ENCODE measurements at regions of chr11 and their contacts with region 1.

Region 1: DNA sequence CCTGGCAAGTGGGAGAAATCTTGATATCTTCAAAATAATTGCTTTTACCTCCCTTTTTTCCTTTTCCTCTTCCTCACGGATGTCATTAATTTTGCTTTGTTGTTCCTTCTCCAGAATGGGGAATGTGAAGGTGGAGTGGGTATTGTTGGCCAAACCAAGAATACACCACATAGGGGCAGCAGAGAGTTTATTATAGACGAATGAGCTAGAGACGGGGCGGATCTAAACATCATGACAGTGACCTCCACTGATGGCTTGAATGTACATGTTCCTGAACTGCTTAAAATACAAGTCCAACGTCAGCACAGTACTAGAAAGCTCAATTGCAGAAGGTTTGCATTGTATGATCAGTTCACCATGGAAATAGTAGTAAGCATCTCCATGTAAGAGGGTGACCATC is 122.3 kb upstream of the SNX19 start:
- DNase-seq: peak; percentile 45 to 59
- H3K4me3 ChIP-seq: no peak overlapping the region
- H3K4me3 Mint-ChIP-seq: no peak overlapping the region
- H3K27ac Mint-ChIP-seq: no peak overlapping the region
- H3K4me1 ChIP-seq: no peaks in the 10 kb centered on the region; the same call in 1 of the 2 replicates
- H3K4me1 Mint-ChIP-seq: no peaks in the 10 kb centered on the region
- H3K27me3 ChIP-seq: no peaks in the 10 kb centered on the region
- H3K27me3 Mint-ChIP-seq: peaks cover 10% of the 10 kb centered on the region
- CTCF ChIP-seq: peak; percentile 33 to 58

Region 2: DNA sequence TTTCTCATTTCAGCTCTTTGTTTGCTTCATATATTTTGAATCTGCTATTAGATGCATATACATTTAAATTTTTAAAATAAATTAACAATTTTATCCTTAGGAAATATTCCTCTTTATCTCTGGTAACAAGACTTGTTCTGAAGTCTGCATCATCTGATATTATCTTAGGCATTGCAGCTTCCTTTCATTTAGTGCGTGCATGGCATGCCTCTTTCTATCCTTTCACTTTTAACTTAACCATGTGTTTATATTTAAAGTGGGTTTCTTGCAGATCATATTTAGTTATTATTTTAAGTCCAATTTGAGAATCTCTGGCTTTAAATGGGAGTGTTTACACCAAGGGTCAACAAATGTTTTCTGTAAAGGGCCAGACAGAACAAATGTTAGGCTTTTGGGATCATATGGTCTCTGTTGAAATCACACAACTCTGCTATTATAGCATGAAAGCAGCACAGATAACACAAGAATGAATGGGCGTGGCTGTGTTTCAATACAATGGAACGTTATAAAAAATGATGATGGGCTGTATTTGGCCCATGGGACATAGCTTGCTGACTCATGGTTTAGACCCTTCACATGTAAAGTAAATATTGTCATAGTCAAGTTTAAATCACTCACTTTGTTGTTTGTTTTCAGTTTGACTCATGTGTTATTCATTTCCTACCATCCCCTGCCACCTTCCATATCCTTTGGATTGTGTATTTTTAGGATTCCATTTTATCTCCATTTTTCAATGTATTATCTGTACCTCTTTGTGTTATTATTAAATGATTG is 38.4 kb before region 1 on chr11:
- CTCF ChIA-PET with region 1: no interaction called
- POLR2A ChIA-PET with region 1: interaction called, 4 read pairs
- intact Hi-C with region 1: loop called (anchors 1 kb)
- DNase-seq: peak; percentile 47 to 57
- H3K4me3 ChIP-seq: no peak overlapping the region
- H3K4me3 Mint-ChIP-seq: no peak overlapping the region
- H3K27ac Mint-ChIP-seq: no peak overlapping the region
- H3K4me1 ChIP-seq: peaks cover 7% of the 10 kb centered on the region; the same call in 1 of the 2 replicates
- H3K4me1 Mint-ChIP-seq: peaks cover 21% of the 10 kb centered on the region
- H3K27me3 ChIP-seq: no peaks in the 10 kb centered on the region
- H3K27me3 Mint-ChIP-seq: peaks cover 5% of the 10 kb centered on the region
- CTCF ChIP-seq: no peak

Region 3: DNA sequence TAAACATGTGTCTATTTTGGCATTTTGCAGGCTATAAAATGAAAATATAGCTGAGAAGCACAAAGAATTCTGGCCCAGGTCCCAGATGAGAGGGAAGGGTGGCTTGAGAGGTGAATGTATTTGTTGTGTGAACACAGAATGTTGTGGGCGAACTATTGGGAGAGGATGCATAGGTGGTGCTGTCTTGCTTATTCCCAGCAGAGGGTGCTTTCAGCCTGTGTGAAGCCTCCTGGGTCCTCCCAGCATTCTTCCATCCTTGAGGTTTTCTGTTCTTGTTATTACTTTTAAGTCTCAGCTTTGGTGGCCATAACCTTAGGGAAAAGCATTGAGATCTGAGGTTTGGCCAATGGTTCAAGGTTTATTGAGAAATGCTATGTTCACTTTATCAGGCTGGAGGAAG is 13.6 kb before region 1 on chr11:
- CTCF ChIA-PET with region 1: interaction called, 4 read pairs
- POLR2A ChIA-PET with region 1: no interaction called
- intact Hi-C with region 1: loop called (anchors 1 kb)
- DNase-seq: peak in 1 of 2 experiments; percentile 44
- H3K4me3 ChIP-seq: no peak overlapping the region
- H3K4me3 Mint-ChIP-seq: no peak overlapping the region
- H3K27ac Mint-ChIP-seq: no peak overlapping the region
- H3K4me1 ChIP-seq: no peaks in the 10 kb centered on the region
- H3K4me1 Mint-ChIP-seq: no peaks in the 10 kb centered on the region
- H3K27me3 ChIP-seq: no peaks in the 10 kb centered on the region
- H3K27me3 Mint-ChIP-seq: peaks cover 33% of the 10 kb centered on the region
- CTCF ChIP-seq: peak; percentile 67 to 77

Region 4: GRCh38 chr11:131204765-131205380 is 166.3 kb after region 1 on chr11:
- CTCF ChIA-PET with region 1: no interaction called
- POLR2A ChIA-PET with region 1: no interaction called
- intact Hi-C with region 1: no loop called
- DNase-seq: no peak
- H3K4me3 ChIP-seq: no peak overlapping the region
- H3K4me3 Mint-ChIP-seq: no peak overlapping the region
- H3K27ac Mint-ChIP-seq: no peak overlapping the region
- H3K4me1 ChIP-seq: no peaks in the 10 kb centered on the region
- H3K4me1 Mint-ChIP-seq: no peaks in the 10 kb centered on the region
- H3K27me3 ChIP-seq: no peaks in the 10 kb centered on the region
- H3K27me3 Mint-ChIP-seq: peaks cover 18% of the 10 kb centered on the region
- CTCF ChIP-seq: no peak

Region 5: DNA sequence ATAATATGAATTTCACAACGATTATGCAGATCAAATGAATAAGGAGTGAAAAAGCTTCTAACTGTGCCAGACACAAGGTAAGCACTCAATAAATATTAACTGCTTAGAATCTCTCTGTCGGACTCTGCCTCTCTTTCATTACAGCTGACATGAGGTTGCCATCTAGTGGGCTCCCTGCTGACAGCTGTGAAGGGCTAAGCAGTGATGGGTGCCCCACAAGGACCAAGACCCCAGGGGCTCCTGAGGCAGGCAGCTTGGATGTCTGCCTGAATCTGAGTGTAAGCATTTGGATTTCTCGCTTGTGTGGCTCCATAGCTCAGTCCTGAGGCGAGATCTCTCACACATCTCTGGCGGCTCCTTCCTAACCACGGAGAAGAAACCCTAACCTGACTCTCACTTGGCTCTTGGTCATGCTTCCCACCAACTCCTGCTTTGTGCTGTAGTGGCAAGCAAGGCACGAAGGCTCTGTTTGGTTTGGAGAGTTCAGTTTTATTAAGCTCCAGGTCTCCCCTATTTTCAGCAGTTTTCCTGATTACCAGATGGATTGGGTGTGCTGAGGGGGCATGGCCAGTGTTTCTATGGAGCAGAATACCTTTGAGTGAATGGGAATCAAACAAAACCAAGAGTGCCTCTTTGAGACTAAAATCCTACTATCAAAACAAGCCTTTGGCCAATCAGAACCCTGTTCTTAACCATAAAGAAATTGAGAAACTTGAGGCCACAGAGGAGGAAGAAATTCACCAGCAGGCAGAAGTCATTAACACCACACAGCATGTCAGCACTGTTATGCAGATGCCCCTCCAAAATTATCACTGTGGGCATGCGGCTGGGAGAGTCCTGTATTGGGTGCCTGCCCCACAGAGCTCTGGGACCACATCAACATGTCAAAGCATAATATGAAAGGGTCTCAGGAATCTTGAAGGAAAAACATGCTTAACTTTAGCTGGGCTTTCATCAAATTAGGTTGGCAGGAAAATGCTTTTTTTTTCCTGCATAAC is 179.0 kb after region 1 on chr11:
- CTCF ChIA-PET with region 1: interaction called, 3 read pairs
- POLR2A ChIA-PET with region 1: no interaction called
- intact Hi-C with region 1: loop called (anchors 1 kb)
- DNase-seq: peak in 1 of 2 experiments; percentile 40
- H3K4me3 ChIP-seq: no peak overlapping the region
- H3K4me3 Mint-ChIP-seq: no peak overlapping the region
- H3K27ac Mint-ChIP-seq: no peak overlapping the region
- H3K4me1 ChIP-seq: no peaks in the 10 kb centered on the region
- H3K4me1 Mint-ChIP-seq: no peaks in the 10 kb centered on the region
- H3K27me3 ChIP-seq: no peaks in the 10 kb centered on the region
- H3K27me3 Mint-ChIP-seq: peaks cover 36% of the 10 kb centered on the region
- CTCF ChIP-seq: peak; percentile 48 to 80

Measured in Caco-2 (cell line).